B cell (primary cell): ENCODE measurements at regions of chr13 and their contacts with region 1.

Region 1: GRCh38 chr13:25819856-25820530 is 231.8 kb downstream of the SHISA2 start:
- DNase-seq: no peak
- ATAC-seq: no peak
- H3K4me3 ChIP-seq: no peak overlapping the region
- H3K4me3 Mint-ChIP-seq: no peak overlapping the region
- H3K27ac ChIP-seq: no peak overlapping the region
- H3K27ac Mint-ChIP-seq: no peak overlapping the region
- H3K4me1 ChIP-seq: no peaks in the 10 kb centered on the region
- H3K4me1 Mint-ChIP-seq: no peaks in the 10 kb centered on the region
- H3K27me3 ChIP-seq: no peaks in the 10 kb centered on the region
- H3K27me3 Mint-ChIP-seq: no peaks in the 10 kb centered on the region
- CTCF ChIP-seq: no peak

Region 2: DNA sequence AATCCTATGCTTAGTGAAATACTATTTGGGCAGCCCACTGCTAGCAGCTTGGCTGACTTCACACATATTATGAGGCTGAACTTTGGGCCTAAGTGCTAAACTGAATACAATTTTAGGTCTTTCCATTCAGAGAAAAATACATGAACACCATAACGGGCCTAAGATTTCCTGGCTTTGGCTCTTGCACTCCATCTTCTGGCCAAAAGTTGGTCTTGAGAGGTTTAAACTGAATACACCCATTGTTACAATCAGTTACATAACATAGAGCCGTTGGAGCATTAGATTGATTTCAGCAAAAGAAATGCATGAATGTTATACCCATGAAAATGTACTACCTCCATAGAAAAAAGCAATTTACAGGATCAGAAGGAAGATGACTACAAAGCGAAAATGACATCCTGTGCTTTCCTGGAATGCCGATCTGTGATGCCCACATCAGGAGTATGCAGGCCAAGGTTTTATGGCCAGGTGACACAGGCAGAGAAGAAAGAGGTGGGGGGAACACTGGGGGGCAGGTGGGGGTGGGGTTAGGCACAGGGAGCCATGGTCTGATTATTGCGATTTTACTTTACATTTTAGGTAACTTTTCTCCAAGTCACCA is 243.0 kb after region 1 on chr13:
- CTCF ChIA-PET with region 1: no interaction called
- POLR2A ChIA-PET with region 1: no interaction called
- intact Hi-C with region 1: loop called (anchors 10 kb)
- DNase-seq: peak; percentile 23
- ATAC-seq: no peak
- H3K4me3 ChIP-seq: no peak overlapping the region
- H3K4me3 Mint-ChIP-seq: no peak overlapping the region
- H3K27ac ChIP-seq: no peak overlapping the region
- H3K27ac Mint-ChIP-seq: no peak overlapping the region
- H3K4me1 ChIP-seq: no peaks in the 10 kb centered on the region
- H3K4me1 Mint-ChIP-seq: no peaks in the 10 kb centered on the region
- H3K27me3 ChIP-seq: peaks cover 0 to 3% (median 0%) of the 10 kb centered on the region in 4 experiments
- H3K27me3 Mint-ChIP-seq: peaks cover 16% of the 10 kb centered on the region
- CTCF ChIP-seq: no peak